Activated T-helper 1 cell treated with anti-CD3 and anti-CD28 coated beads, Interleukin-12 subunit alpha, Interleukin-12 subunit beta, Interleukin-2, Interleukin-4 antibody, amounts not matched to agents 30 ng/mL and 10 ng/mL and 1 ng/mL, durations not matched to agents 14 hours and 24 hours and 36 hours (primary cell): ENCODE measurements at regions of chr2 and their contacts with region 1.

Region 1: DNA sequence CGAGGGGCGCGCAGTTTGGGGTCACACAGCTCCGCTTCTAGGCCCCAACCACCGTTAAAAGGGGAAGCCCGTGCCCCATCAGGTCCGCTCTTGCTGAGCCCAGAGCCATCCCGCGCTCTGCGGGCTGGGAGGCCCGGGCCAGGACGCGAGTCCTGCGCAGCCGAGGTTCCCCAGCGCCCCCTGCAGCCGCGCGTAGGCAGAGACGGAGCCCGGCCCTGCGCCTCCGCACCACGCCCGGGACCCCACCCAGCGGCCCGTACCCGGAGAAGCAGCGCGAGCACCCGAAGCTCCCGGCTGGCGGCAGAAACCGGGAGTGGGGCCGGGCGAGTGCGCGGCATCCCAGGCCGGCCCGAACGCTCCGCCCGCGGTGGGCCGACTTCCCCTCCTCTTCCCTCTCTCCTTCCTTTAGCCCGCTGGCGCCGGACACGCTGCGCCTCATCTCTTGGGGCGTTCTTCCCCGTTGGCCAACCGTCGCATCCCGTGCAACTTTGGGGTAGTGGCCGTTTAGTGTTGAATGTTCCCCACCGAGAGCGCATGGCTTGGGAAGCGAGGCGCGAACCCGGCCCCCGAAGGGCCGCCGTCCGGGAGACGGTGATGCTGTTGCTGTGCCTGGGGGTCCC is at the start of gene ITGA4:
- DNase-seq: peak; percentile 85
- H3K4me3 Mint-ChIP-seq: peak within 1 kb of the TSS; percentile 98
- H3K27ac Mint-ChIP-seq: peak within 1 kb of the TSS; percentile 96
- H3K4me1 Mint-ChIP-seq: peaks cover 75% of the 10 kb centered on the region
- H3K27me3 Mint-ChIP-seq: no peaks in the 10 kb centered on the region
- total RNA-seq, gene ITGA4: 98.5 and 118 TPM in 2 replicates

Region 2: GRCh38 chr2:181178823-181179412 is 278.3 kb before region 1 on chr2:
- intact Hi-C with region 1: loop called (anchors 1 kb)
- DNase-seq: no peak
- H3K4me3 Mint-ChIP-seq: peak overlapping the region; percentile 7
- H3K27ac Mint-ChIP-seq: peak overlapping the region; percentile 57
- H3K4me1 Mint-ChIP-seq: peaks cover 56% of the 10 kb centered on the region
- H3K27me3 Mint-ChIP-seq: no peaks in the 10 kb centered on the region

Region 3: GRCh38 chr2:181305301-181306123 is 151.7 kb before region 1 on chr2:
- intact Hi-C with region 1: loop called (anchors 1 kb)
- DNase-seq: peak; percentile 62
- H3K4me3 Mint-ChIP-seq: peak overlapping the region; percentile 74
- H3K27ac Mint-ChIP-seq: peak overlapping the region; percentile 96
- H3K4me1 Mint-ChIP-seq: peaks cover 84% of the 10 kb centered on the region
- H3K27me3 Mint-ChIP-seq: no peaks in the 10 kb centered on the region

Region 4: GRCh38 chr2:181357979-181358378 is 99.3 kb before region 1 on chr2:
- intact Hi-C with region 1: loop called (anchors 2 kb)
- DNase-seq: no peak
- H3K4me3 Mint-ChIP-seq: no peak overlapping the region
- H3K27ac Mint-ChIP-seq: no peak overlapping the region
- H3K4me1 Mint-ChIP-seq: peaks cover 18% of the 10 kb centered on the region
- H3K27me3 Mint-ChIP-seq: no peaks in the 10 kb centered on the region

Region 5: DNA sequence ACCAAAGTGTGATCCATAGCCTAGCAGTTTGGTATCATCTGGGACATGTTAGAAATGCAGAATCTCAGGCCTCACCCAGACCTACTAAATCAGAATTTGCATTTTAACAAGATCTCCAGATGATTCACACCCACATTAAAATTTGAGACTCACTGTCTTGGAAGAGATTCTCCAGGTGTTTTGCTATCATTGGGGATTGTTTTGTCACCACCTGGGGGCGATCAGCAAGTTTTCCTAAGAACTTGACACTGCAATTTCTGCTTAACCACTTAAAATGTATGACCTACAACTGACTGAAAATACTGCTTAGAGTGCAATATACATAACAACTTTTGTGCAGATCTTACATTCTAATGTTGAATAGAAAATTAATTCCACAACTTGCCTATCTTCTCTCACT is 19.0 kb before region 1 on chr2:
- intact Hi-C with region 1: loop called (anchors 2 kb)
- DNase-seq: no peak
- H3K4me3 Mint-ChIP-seq: no peak overlapping the region
- H3K27ac Mint-ChIP-seq: no peak overlapping the region
- H3K4me1 Mint-ChIP-seq: peaks cover 24% of the 10 kb centered on the region
- H3K27me3 Mint-ChIP-seq: no peaks in the 10 kb centered on the region